Colonic mucosa (tissue), 4 donors: ENCODE measurements at regions of chr15 and their contacts with region 1.

Region 1: DNA sequence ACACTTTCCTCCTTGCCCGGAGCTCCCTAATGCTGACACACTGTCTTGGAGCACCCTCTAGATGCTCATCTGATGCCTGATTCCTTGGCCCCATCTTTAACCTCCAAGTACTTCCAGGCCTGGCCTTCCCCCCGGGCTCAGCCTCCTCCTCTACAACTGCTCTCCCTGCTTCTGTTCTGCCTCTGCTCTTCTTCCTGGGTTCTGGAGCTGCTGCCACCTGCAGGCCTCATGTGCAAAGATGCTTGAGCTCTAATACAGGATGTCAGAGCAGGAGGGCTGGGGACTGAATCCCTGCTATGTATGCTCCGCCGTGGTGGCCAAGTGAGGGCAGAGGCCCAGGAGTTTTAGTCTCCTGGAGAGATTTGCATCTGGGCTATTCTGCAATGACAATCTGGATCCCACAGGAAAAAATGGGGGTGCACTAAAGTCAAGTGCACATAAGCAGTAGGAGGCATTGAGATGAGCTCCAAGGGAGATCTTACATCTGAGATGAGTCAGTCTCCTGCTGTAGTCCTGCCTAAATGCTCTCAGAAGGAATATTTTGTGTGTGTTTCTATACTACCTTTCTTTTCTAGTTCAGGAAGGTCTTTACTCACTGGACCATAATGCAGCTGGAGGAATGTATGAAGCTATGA is 296.3 kb downstream of the UACA start:
- DNase-seq: peak; percentile 52
- H3K4me3 ChIP-seq: no peak overlapping the region
- H3K27ac ChIP-seq: no peak overlapping the region
- H3K4me1 ChIP-seq: no peaks in the 10 kb centered on the region
- H3K27me3 ChIP-seq: no peaks in the 10 kb centered on the region
- CTCF ChIP-seq: peak; percentile 56

Region 2: GRCh38 chr15:69475769-69476358 is 991.1 kb before region 1 on chr15:
- intact Hi-C with region 1: loop called (anchors 5 kb)
- DNase-seq: peak; percentile 84
- H3K4me3 ChIP-seq: no peak overlapping the region
- H3K27ac ChIP-seq: no peak overlapping the region
- H3K4me1 ChIP-seq: no peaks in the 10 kb centered on the region
- H3K27me3 ChIP-seq: no peaks in the 10 kb centered on the region
- CTCF ChIP-seq: peak; percentile 98

Region 3: GRCh38 chr15:69734688-69735087 is 732.3 kb before region 1 on chr15:
- intact Hi-C with region 1: loop called (anchors 5 kb)
- DNase-seq: no peak
- H3K4me3 ChIP-seq: no peak overlapping the region
- H3K27ac ChIP-seq: no peak overlapping the region
- H3K4me1 ChIP-seq: no peaks in the 10 kb centered on the region
- H3K27me3 ChIP-seq: no peaks in the 10 kb centered on the region
- CTCF ChIP-seq: no peak